ENCODE measurements at regions of chr10 and their contacts with region 1.

Region 1: DNA sequence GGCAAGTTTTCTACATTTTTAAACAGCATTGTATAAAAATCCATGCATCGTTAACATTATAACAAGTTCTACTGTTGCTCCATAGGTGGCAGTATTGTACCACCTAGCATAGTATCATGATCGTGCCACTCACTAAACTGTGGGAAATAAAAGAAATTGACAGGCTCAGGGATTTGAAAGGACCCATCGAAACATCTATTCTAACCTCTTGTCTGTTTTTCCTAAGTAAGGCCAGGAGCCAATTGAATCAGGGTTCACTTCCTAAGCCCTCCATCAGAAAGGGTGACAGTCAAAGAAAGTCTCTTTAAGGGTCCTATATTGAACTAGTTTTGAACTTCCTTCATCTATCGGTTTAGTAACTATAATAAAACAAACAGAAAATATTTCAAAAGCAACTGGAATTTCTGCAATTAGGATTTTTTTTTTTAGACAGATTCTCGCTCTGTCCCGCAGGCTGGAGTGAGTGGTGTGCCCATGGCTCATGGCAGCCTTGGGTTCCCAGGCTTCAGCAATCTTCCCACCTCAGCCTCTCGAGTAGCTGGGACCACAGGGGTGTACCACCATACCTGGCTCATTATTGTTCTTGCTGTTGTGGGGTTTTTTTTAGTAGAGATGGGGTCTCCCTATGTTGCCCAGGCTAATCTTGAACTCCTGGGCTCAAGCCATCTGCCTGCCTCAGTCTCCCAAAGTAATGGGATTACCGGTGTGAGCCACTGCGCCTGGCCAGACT is 9.4 kb downstream of the HACD1 start:
- DNase-seq: no peak
- ATAC-seq: peak; percentile 78 to 94 (median 84)
- H3K4me3 ChIP-seq: no peak overlapping the region
- H3K27ac ChIP-seq: no peak overlapping the region
- H3K4me1 ChIP-seq: peaks cover 3% of the 10 kb centered on the region
- H3K27me3 ChIP-seq: no peaks in the 10 kb centered on the region
- CTCF ChIP-seq: peak; percentile 94

Region 2: GRCh38 chr10:17742918-17743317 is 135.2 kb after region 1 on chr10:
- intact Hi-C with region 1: loop called (anchors 1 to 5 kb)
- DNase-seq: peak; percentile 58 to 68
- ATAC-seq: peak in 2 of 4 donors; percentile 29 to 57
- H3K4me3 ChIP-seq: no peak overlapping the region
- H3K27ac ChIP-seq: no peak overlapping the region
- H3K4me1 ChIP-seq: peaks cover 17% of the 10 kb centered on the region
- H3K27me3 ChIP-seq: no peaks in the 10 kb centered on the region
- CTCF ChIP-seq: peak; percentile 82

Region 3: DNA sequence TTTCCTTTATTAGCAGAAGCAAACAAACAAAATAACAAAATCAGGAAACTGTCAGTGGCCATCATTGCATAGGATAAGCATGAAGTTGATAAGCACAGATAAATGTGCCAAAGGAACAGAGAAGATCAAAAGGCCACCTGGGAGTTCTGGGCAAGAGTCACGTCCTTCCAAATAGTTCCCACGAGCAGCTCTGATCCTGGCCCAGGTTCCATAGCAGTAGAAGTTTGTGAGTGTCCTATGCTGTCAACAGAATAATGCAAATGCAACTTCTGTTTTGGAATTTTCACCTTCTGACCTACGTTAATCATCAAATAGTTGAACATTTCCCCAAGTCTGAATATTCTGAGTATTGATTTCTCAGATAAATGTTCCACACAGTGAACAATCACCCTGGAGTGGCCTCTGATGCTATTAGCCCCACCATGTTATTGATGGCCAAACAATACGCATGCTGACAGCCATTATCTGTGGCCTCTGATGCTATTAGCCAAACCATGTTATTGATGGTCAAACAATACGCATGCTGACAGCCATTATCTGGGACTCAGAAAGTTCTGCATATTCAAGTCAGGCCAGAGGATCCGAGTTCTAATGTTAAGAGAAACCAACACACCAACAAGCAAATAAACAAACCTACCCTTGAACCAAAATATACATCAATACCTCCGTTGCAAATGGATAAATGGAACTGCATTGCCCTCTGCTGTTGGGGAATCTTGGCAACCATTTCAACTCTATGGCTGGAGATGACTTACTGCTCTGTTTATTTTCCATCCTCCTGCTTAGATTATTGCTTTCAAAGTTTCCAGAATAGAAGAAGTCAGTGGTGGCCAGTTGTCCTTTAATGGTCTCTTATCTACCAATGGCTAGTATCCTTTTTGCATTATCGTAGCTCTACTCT is 264.7 kb after region 1 on chr10:
- intact Hi-C with region 1: loop called in 1 of 2 experiments (anchors 2 kb)
- DNase-seq: no peak
- ATAC-seq: peak; percentile 51 to 74 (median 58)
- H3K4me3 ChIP-seq: no peak overlapping the region
- H3K27ac ChIP-seq: no peak overlapping the region
- H3K4me1 ChIP-seq: no peaks in the 10 kb centered on the region
- H3K27me3 ChIP-seq: no peaks in the 10 kb centered on the region
- CTCF ChIP-seq: peak; percentile 57

Region 4: DNA sequence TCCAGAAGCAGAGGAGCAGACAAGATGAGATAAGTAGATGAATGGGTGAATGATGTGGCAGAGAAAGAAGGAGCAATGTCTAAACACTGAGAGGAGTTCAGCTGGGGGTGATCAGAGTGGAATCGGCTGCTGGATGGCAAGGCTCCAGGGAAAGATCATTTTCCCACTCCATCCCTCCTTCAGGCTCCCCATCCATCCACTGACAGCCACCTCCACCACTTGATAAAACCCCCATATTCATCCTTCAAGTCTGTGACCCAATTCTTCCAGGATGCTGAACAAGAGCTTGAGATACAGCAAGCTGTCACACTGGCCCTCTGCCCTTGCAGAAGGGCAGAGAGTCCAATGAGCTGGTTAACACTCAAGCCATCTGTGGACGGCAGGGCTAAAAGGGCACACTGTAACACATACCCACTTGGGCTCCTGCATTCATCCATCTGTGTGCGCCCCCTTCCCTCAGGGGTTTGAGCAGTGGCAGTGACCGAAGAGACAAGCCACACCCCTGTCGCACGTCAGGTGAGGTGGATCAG is 501.6 kb after region 1 on chr10:
- intact Hi-C with region 1: loop called in 1 of 2 experiments (anchors 5 kb)
- DNase-seq: no peak
- ATAC-seq: no peak
- H3K4me3 ChIP-seq: no peak overlapping the region
- H3K27ac ChIP-seq: no peak overlapping the region
- H3K4me1 ChIP-seq: no peaks in the 10 kb centered on the region
- H3K27me3 ChIP-seq: no peaks in the 10 kb centered on the region
- CTCF ChIP-seq: no peak

Region 5: DNA sequence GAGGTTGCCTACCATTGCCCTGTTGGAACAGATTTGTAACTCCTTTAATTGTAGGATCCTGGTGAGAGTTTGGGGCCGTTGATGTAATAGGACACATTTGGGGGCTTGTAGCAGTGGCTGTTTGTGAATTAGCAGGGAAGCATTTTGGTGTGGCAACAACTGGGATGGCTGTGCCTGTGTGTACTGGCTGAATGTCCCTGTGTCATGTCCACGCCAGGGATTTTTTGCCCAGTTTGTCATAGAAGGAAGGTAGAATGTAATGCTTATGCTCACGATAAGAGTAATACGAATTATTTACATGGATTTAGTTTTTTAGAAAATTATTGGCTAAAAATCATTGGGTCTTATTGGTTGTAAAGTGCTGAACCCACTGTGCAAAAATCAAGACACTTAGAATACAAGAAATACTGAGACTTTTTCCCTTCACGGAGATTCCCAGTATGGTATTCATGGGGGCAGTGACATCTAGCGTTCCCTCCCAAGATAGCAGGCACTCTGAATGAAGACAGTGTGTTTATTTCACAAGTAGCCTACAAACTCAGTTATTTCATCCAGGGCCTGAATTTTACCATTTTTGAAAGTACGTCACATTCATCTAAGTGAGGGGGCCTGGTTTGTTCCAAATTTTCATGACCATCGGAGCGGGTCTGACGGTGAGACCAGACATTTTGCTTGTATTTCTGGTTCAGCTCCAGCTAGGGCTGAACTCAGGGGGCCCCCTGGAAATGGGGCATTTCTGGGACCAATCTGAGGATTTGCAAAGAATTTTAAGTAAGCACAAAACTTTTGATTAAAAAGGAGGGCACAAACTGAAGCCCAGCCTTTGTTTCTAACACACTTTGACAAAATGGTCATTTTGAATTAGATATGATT is 607.2 kb after region 1 on chr10:
- intact Hi-C with region 1: loop called (anchors 10 kb)
- DNase-seq: no peak
- ATAC-seq: peak; percentile 44 to 91 (median 70)
- H3K4me3 ChIP-seq: no peak overlapping the region
- H3K27ac ChIP-seq: no peak overlapping the region
- H3K4me1 ChIP-seq: no peaks in the 10 kb centered on the region
- H3K27me3 ChIP-seq: no peaks in the 10 kb centered on the region
- CTCF ChIP-seq: peak; percentile 72

Measured in psoas muscle (tissue), 8 donors.